Right cardiac atrium (tissue), 5 donors: ENCODE measurements at regions of chr15 and their contacts with region 1.

Region 1: GRCh38 chr15:39782441-39783138 is at the start of gene FSIP1:
- DNase-seq: peak; percentile 98 to 99 (median 99)
- ATAC-seq: peak; percentile 100
- H3K4me3 ChIP-seq: peak within 1 kb of the TSS; percentile 71
- H3K27ac ChIP-seq: peak within 1 kb of the TSS; percentile 69
- H3K4me1 ChIP-seq: peaks cover 4% of the 10 kb centered on the region
- H3K27me3 ChIP-seq: no peaks in the 10 kb centered on the region
- total RNA-seq, gene FSIP1: 0.25 to 0.53 (median 0.41) TPM

Region 2: GRCh38 chr15:39874890-39875549 is 92.4 kb after region 1 on chr15:
- intact Hi-C with region 1: loop called in 1 of 4 experiments (anchors 5 kb)
- DNase-seq: no peak
- ATAC-seq: no peak
- H3K4me3 ChIP-seq: no peak overlapping the region
- H3K27ac ChIP-seq: no peak overlapping the region
- H3K4me1 ChIP-seq: peaks cover under 1% of the 10 kb centered on the region
- H3K27me3 ChIP-seq: no peaks in the 10 kb centered on the region

Region 3: GRCh38 chr15:39934397-39935071 is 151.9 kb after region 1 on chr15:
- intact Hi-C with region 1: loop called in 1 of 4 experiments (anchors 10 kb)
- DNase-seq: no peak
- ATAC-seq: peak; percentile 4 to 10
- H3K4me3 ChIP-seq: peak overlapping the region; percentile 76
- H3K27ac ChIP-seq: peak overlapping the region; percentile 84
- H3K4me1 ChIP-seq: no peaks in the 10 kb centered on the region
- H3K27me3 ChIP-seq: no peaks in the 10 kb centered on the region

Region 4: GRCh38 chr15:39976291-39977274 is 194.0 kb after region 1 on chr15:
- intact Hi-C with region 1: loop called in 1 of 4 experiments (anchors 5 kb)
- DNase-seq: peak; percentile 72 to 90 (median 89)
- ATAC-seq: peak; percentile 95
- H3K4me3 ChIP-seq: peak overlapping the region; percentile 34
- H3K27ac ChIP-seq: peak overlapping the region; percentile 50
- H3K4me1 ChIP-seq: no peaks in the 10 kb centered on the region
- H3K27me3 ChIP-seq: no peaks in the 10 kb centered on the region